ENCODE measurements at regions of chr14 and their contacts with region 1.

Region 1: DNA sequence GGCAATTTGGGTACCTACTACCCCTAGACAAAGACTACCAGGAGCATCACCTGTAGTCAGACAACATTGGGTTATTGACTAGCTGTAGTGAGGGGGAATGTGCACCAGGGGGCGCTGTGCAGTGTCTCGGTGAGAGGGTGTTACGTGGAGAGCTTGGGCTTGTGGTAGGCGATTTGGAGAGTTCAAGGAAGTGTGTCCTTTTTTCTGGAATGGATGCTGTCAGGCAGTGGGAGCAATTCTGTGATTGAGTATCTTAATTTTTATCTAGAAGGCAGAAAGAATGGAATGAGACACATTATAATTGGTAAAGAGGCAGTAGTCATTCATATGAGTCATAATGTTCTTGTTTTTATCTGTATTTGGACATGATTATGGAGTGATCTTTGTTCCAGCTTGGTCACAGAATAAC is 187.7 kb downstream of the GALC start:
- DNase-seq: peak; percentile 69
- ATAC-seq: peak; percentile 72
- H3K4me3 Mint-ChIP-seq: no peak overlapping the region
- H3K27ac Mint-ChIP-seq: no peak overlapping the region
- H3K4me1 Mint-ChIP-seq: no peaks in the 10 kb centered on the region
- H3K27me3 Mint-ChIP-seq: no peaks in the 10 kb centered on the region
- CTCF ChIP-seq: peak; percentile 97

Region 2: DNA sequence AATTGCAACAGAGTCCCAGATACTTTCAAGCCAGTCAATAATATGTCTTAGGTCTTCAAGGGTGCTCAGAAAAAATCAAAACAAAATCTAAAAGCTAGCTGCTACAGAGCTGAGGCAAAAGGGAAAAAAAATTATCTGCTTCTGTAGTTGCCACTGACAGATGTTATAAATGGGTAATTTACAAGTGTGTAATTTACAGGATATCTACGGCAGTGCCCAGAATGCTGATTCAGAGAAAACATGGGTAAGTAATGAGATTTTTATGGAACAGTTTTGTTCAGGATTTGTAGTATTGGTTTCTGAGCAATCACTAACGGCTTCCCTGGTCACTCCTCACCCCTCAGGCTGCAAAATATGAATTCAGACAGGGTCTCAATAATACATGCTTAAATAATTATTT is 46.4 kb before region 1 on chr14:
- CTCF ChIA-PET with region 1: no interaction called
- POLR2A ChIA-PET with region 1: no interaction called
- intact Hi-C with region 1: no loop called
- DNase-seq: no peak
- ATAC-seq: no peak
- H3K4me3 Mint-ChIP-seq: no peak overlapping the region
- H3K27ac Mint-ChIP-seq: no peak overlapping the region
- H3K4me1 Mint-ChIP-seq: no peaks in the 10 kb centered on the region
- H3K27me3 Mint-ChIP-seq: peaks cover 9% of the 10 kb centered on the region
- CTCF ChIP-seq: no peak

Region 3: DNA sequence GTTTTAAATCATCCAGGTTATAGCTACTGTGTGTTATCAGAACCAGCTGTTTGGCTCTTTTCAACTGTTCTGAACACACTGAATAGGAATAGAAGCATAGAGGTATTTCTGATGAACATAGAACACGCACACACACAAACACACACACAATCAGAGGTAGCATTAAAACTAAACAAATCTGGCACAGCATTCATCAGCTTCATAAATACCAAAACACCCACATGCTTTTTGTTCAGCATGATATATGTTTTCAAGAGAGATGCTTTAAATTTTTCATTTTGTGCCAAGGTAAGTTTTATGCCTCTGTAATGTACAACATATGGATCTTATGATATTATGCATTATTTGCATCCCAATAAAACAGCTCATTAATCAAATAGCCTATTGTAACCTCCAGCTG is 20.9 kb before region 1 on chr14:
- CTCF ChIA-PET with region 1: interaction called, 15 read pairs
- POLR2A ChIA-PET with region 1: interaction called, 3 read pairs
- intact Hi-C with region 1: no loop called
- DNase-seq: no peak
- ATAC-seq: no peak
- H3K4me3 Mint-ChIP-seq: no peak overlapping the region
- H3K27ac Mint-ChIP-seq: no peak overlapping the region
- H3K4me1 Mint-ChIP-seq: no peaks in the 10 kb centered on the region
- H3K27me3 Mint-ChIP-seq: no peaks in the 10 kb centered on the region
- CTCF ChIP-seq: no peak

Region 4: DNA sequence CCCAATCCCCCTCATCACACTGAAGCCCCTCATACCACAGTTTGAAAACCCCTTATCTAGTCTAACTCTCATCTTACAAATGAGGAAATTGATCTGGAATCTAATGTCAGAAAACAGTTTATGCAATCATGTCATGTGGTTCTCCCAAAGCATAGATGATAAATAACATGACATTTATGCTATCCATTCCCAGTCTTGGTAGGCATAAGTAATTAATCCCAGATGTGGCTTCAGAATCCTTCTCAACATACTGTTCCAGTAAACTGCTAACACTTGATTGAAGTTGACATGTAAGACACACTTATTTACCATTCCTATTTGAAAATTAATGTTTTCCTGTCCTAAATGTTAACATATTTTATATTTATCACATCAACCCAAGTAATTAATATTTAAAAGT is 18.9 kb after region 1 on chr14:
- CTCF ChIA-PET with region 1: interaction called, 11 read pairs
- POLR2A ChIA-PET with region 1: no interaction called
- intact Hi-C with region 1: no loop called
- DNase-seq: no peak
- ATAC-seq: no peak
- H3K4me3 Mint-ChIP-seq: no peak overlapping the region
- H3K27ac Mint-ChIP-seq: no peak overlapping the region
- H3K4me1 Mint-ChIP-seq: no peaks in the 10 kb centered on the region
- H3K27me3 Mint-ChIP-seq: no peaks in the 10 kb centered on the region
- CTCF ChIP-seq: no peak

Region 5: GRCh38 chr14:87896393-87897380 is 91.4 kb after region 1 on chr14:
- CTCF ChIA-PET with region 1: interaction called, 74 read pairs
- POLR2A ChIA-PET with region 1: no interaction called
- intact Hi-C with region 1: loop called (anchors 2 kb)
- DNase-seq: peak; percentile 4
- ATAC-seq: no peak
- H3K4me3 Mint-ChIP-seq: no peak overlapping the region
- H3K27ac Mint-ChIP-seq: no peak overlapping the region
- H3K4me1 Mint-ChIP-seq: no peaks in the 10 kb centered on the region
- H3K27me3 Mint-ChIP-seq: peaks cover 14% of the 10 kb centered on the region
- CTCF ChIP-seq: peak; percentile 85

Measured in activated CD8-positive, alpha-beta T cell treated with anti-CD3 and anti-CD28 coated beads for 36 hours (primary cell).